ENCODE measurements at regions of chr3 and their contacts with region 1.

Region 1: DNA sequence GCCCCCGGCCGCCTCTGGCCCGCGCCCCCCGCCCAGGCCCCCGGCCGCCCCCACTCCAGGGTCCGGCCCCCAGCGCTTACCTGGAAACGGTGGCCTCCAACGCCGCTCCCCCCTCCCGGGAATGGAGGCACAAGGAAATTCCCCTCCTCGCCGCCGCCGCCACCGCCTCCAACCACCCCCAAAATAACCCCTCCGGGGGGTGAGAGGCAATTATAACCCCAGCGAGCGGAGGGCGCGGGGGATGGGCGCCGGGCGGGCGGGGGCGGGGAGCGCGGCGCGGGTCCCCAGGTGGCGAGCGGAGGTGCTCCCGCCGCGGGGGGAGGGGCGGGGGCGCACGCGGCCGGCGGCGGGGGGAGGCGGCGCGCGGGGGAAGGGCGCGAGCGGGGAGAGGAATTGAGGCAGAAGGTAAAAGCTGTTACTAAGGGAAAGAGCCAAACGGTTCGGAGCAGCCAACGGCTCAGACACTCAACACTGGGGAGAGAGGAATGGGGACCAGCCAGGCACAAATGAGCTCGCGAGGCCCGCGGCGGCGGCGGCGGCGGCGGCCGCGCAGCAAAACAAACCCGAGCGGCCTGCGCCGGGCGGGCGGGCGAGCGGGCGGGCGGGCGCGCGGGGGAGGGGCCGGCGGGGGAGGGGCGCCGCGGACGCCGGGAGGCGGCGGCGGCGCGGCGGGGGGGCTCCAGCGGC is at the start of gene TBL1XR1:
- DNase-seq: peak; percentile 84
- H3K4me3 Mint-ChIP-seq: peak within 1 kb of the TSS; percentile 96
- H3K27ac Mint-ChIP-seq: peak within 1 kb of the TSS; percentile 99
- H3K4me1 Mint-ChIP-seq: peaks cover 62% of the 10 kb centered on the region
- H3K27me3 Mint-ChIP-seq: no peaks in the 10 kb centered on the region
- total RNA-seq, gene TBL1XR1: 149 to 162 TPM

Region 2: GRCh38 chr3:177144923-177145780 is 52.0 kb before region 1 on chr3:
- CTCF ChIA-PET with region 1: interaction called, 3 read pairs
- intact Hi-C with region 1: loop called (anchors 1 kb)
- DNase-seq: no peak
- H3K4me3 Mint-ChIP-seq: no peak overlapping the region
- H3K27ac Mint-ChIP-seq: peak overlapping the region; percentile 56
- H3K4me1 Mint-ChIP-seq: peaks cover 67% of the 10 kb centered on the region
- H3K27me3 Mint-ChIP-seq: no peaks in the 10 kb centered on the region

Region 3: DNA sequence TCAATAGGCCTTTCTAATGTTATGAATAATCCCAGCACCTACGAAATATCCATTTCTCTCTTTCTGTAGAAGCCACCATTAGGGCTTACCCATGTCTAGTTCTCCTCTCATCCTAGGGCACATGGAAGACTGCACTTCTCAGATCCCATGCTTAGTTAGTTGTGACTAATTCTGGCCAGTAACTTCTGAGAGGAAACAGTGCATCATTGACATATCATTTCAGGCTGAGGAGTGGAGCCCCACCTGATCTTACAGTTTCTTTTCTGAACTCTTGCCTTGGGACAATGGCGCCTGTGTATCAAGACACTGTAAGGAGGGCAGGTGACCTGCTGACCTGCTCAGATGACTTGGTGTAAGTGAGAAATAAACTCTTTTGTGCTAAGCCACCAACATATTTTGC is 39.5 kb after region 1 on chr3:
- CTCF ChIA-PET with region 1: no interaction called
- intact Hi-C with region 1: no loop called
- DNase-seq: peak; percentile 18
- H3K4me3 Mint-ChIP-seq: no peak overlapping the region
- H3K27ac Mint-ChIP-seq: no peak overlapping the region
- H3K4me1 Mint-ChIP-seq: peaks cover 9% of the 10 kb centered on the region
- H3K27me3 Mint-ChIP-seq: no peaks in the 10 kb centered on the region

Region 4: GRCh38 chr3:177337541-177338331 is 140.6 kb after region 1 on chr3:
- CTCF ChIA-PET with region 1: no interaction called
- intact Hi-C with region 1: loop called (anchors 1 kb)
- DNase-seq: peak; percentile 91
- H3K4me3 Mint-ChIP-seq: no peak overlapping the region
- H3K27ac Mint-ChIP-seq: peak overlapping the region; percentile 42
- H3K4me1 Mint-ChIP-seq: peaks cover 36% of the 10 kb centered on the region
- H3K27me3 Mint-ChIP-seq: peaks cover 5% of the 10 kb centered on the region

Region 5: GRCh38 chr3:177419904-177420601 is 222.9 kb after region 1 on chr3:
- CTCF ChIA-PET with region 1: no interaction called
- intact Hi-C with region 1: loop called (anchors 1 kb)
- DNase-seq: peak; percentile 53
- H3K4me3 Mint-ChIP-seq: no peak overlapping the region
- H3K27ac Mint-ChIP-seq: peak overlapping the region; percentile 86
- H3K4me1 Mint-ChIP-seq: peaks cover 27% of the 10 kb centered on the region
- H3K27me3 Mint-ChIP-seq: peaks cover 2% of the 10 kb centered on the region

Region 6: DNA sequence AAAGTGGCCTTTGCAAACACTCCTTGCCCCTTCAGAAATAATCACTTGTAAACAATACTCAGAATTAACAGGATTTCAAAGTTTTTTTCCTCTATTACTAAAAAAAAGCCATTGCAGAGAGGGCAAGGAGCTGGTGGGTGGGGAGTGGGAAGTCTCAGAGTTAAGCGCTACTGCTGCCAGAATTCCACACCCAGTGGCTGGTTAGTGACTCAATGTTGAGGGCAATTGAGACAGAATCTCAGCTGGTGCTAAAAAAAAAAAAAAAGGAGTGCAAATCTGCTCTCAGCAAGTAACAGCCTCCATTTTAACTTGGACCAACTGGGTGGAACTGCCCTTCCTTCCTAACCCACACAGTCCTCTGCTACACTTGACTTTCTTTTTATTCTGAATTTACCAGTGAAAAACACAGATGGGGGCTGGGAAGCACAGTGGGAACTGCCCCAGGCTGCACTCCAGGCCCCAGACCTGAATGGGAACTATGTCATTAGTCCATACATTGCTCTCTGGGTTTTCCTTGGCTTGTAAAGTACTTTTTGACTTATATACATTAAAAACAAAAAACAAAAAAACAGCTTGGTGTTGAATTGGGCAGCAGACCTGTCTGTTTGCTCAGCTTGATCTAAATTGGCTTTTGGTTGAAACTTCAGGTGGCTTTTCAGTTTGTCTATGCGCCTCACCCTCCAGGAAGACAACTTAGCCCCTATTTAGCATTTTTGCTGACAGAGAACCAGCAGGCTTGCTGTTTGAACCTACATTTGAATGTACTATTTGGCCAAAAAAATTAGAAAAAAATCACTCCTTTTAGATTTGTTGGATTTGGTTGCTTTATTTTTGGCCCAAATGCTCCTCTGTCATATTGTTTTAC is 357.9 kb after region 1 on chr3:
- CTCF ChIA-PET with region 1: no interaction called
- intact Hi-C with region 1: loop called (anchors 5 kb)
- DNase-seq: no peak
- H3K4me3 Mint-ChIP-seq: no peak overlapping the region
- H3K27ac Mint-ChIP-seq: no peak overlapping the region
- H3K4me1 Mint-ChIP-seq: peaks cover 29% of the 10 kb centered on the region
- H3K27me3 Mint-ChIP-seq: no peaks in the 10 kb centered on the region

Region 7: GRCh38 chr3:178001670-178002101 is 804.5 kb after region 1 on chr3:
- CTCF ChIA-PET with region 1: no interaction called
- intact Hi-C with region 1: loop called (anchors 2 kb)
- DNase-seq: peak; percentile 59
- H3K4me3 Mint-ChIP-seq: no peak overlapping the region
- H3K27ac Mint-ChIP-seq: peak overlapping the region; percentile 80
- H3K4me1 Mint-ChIP-seq: peaks cover 63% of the 10 kb centered on the region
- H3K27me3 Mint-ChIP-seq: no peaks in the 10 kb centered on the region